ENCODE measurements at regions of chr17 and their contacts with region 1.

Region 1: GRCh38 chr17:19867064-19867313 is 747 bp downstream of the ULK2 start:
- DNase-seq: peak; percentile 47 to 60 (median 57)
- H3K4me3 ChIP-seq: peak overlapping the region; percentile 23 to 70
- H3K4me3 Mint-ChIP-seq: peak overlapping the region; percentile 75 to 88 (median 84)
- H3K27ac ChIP-seq: peak overlapping the region; percentile 54
- H3K27ac Mint-ChIP-seq: peak overlapping the region in 6 of 7 donors; percentile 24 to 87 (median 67)
- H3K4me1 ChIP-seq: peaks cover 14% of the 10 kb centered on the region
- H3K4me1 Mint-ChIP-seq: peaks cover 4 to 21% (median 12%) of the 10 kb centered on the region in 4 donors
- H3K27me3 ChIP-seq: no peaks in the 10 kb centered on the region
- H3K27me3 Mint-ChIP-seq: no peaks in the 10 kb centered on the region

Region 2: DNA sequence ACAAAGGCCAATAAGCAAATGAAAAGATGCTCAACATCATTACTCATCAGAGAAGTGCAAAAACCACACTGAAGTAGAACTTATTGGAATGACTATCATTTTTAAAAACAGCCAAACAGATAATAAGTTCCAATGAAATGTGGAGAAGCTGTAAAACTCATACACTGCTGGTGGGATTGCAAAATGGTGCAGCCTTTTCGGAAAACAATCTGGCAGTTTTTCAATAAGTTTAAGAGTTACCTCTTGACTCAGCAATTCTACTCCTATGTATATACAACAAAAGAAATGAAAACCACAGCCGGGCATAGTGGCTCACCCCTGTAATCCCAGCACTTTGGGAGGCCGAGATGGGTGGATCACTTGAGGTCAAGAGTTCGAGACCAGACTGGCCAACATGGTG is 61.3 kb after region 1 on chr17:
- CTCF ChIA-PET with region 1: no interaction called
- POLR2A ChIA-PET with region 1: no interaction called
- intact Hi-C with region 1: loop called (anchors 10 kb)
- DNase-seq: no peak
- H3K4me3 ChIP-seq: no peak overlapping the region
- H3K4me3 Mint-ChIP-seq: no peak overlapping the region
- H3K27ac ChIP-seq: no peak overlapping the region
- H3K27ac Mint-ChIP-seq: peak overlapping the region in 3 of 7 donors; percentile 15 to 69 (median 37)
- H3K4me1 ChIP-seq: no peaks in the 10 kb centered on the region
- H3K4me1 Mint-ChIP-seq: no peaks in the 10 kb centered on the region
- H3K27me3 ChIP-seq: no peaks in the 10 kb centered on the region
- H3K27me3 Mint-ChIP-seq: no peaks in the 10 kb centered on the region

Region 3: GRCh38 chr17:19958023-19958422 is 91.0 kb after region 1 on chr17:
- CTCF ChIA-PET with region 1: no interaction called
- POLR2A ChIA-PET with region 1: no interaction called
- intact Hi-C with region 1: loop called (anchors 10 kb)
- DNase-seq: no peak
- H3K4me3 ChIP-seq: no peak overlapping the region
- H3K4me3 Mint-ChIP-seq: peak overlapping the region in 1 of 8 donors; percentile 18
- H3K27ac ChIP-seq: no peak overlapping the region
- H3K27ac Mint-ChIP-seq: peak overlapping the region in 4 of 7 donors; percentile 1 to 59 (median 15)
- H3K4me1 ChIP-seq: peaks cover 31% of the 10 kb centered on the region
- H3K4me1 Mint-ChIP-seq: peaks cover 30 to 45% (median 39%) of the 10 kb centered on the region in 4 donors
- H3K27me3 ChIP-seq: no peaks in the 10 kb centered on the region
- H3K27me3 Mint-ChIP-seq: no peaks in the 10 kb centered on the region

Measured in CD4-positive, alpha-beta memory T cell (primary cell).